ENCODE measurements at regions of chr6 and their contacts with region 1.

Region 1: DNA sequence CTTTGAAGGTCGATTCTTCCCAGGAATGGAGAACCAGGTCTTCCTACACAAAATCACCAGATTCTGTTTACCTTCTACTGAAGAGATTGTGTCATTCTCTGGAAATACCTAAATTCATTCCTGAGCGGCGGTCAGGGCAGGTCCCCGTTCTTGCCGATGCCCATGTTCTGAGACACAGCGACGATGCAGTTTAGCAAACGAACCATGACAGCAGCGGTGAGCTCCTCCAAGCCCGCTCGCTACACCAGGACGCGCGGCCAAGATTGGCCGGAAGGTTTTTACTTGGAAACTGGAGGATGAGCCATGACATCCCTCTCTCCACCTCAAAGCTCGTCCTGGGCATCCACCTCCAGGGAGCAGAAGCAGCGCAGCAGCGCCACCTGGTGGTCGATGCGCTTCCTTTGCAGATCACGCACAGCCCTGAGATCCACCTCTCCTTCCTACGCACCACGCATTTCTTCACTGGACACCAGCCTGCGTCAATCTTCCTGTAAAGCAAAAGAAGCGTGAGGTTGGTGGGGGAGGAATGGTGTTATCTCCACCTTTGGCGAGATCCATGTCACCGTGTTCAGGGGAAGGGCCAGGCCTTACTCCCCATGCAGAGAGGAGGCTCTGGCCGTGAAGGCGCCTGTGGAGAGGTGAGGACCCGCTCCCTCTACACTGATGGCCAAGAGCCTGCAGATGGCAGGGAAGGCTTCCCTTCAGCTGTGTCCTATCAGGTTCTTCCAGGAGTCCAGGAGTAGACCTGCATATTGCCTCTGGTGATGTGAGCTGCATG is 9.9 kb upstream of the HLA-B start:
- DNase-seq: peak; percentile 64 to 65
- H3K4me3 ChIP-seq: peak overlapping the region; percentile 31; the same call in 1 of the 2 replicates
- H3K27ac ChIP-seq: no peak overlapping the region
- H3K4me1 ChIP-seq: no peaks in the 10 kb centered on the region
- H3K27me3 ChIP-seq: peaks cover 38% of the 10 kb centered on the region
- CTCF ChIP-seq: peak; percentile 88

Region 2: GRCh38 chr6:31143148-31143547 is 223.7 kb before region 1 on chr6:
- CTCF ChIA-PET with region 1: no interaction called
- POLR2A ChIA-PET with region 1: no interaction called
- intact Hi-C with region 1: loop called (anchors 5 kb)
- DNase-seq: no peak
- H3K4me3 ChIP-seq: no peak overlapping the region
- H3K27ac ChIP-seq: no peak overlapping the region
- H3K4me1 ChIP-seq: no peaks in the 10 kb centered on the region
- H3K27me3 ChIP-seq: no peaks in the 10 kb centered on the region
- CTCF ChIP-seq: no peak

Measured in PC-9 (cell line).